ENCODE measurements at regions of chr4 and their contacts with region 1.

Region 1: GRCh38 chr4:173426064-173426463 is 27.1 kb upstream of the SCRG1 start:
- DNase-seq: no peak

Region 2: DNA sequence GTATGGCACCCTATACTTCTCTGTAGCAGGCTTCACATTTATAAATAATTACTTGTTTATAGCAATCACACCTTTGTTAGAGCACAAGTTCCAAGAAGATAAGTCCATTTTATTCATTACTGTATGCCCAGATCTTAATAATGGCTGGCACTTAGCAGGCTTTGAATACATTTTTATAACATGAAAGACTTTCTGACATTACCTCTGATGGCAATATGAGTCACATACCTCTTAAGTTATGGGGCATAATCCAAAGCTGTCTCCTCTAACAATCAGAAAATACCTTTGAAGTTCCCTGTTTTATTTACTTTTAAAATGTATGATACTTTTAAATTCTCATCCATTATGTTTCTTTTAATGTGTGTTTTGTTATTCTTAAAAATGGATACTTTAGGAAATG is 39.3 kb before region 1 on chr4:
- intact Hi-C with region 1: no loop called
- DNase-seq: no peak

Region 3: GRCh38 chr4:173461170-173461569 is 35.1 kb after region 1 on chr4:
- intact Hi-C with region 1: no loop called
- DNase-seq: no peak

Region 4: DNA sequence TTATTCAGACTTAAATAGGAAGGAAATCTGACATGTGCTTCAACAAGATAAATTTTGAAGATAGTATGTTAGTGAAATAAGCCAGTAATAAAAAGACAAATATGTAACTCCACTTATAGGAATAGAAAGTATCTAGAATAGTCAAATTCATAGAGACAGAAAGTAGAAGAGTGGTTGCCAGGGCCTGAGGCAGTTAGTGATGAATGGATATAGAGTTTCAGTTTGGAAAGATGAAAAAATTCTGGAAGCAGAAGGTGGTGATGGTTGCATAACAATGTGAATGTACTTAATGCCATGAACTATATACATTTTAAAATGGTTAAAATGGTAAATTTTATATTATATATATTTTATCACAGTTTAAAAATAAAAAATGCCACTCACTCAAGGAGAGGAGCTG is 49.7 kb after region 1 on chr4:
- intact Hi-C with region 1: loop called in 1 of 2 experiments (anchors 2 kb)
- DNase-seq: no peak

Measured in posterior vena cava (tissue), 2 donors.